ENCODE measurements at regions of chr4 and their contacts with region 1.

Region 1: DNA sequence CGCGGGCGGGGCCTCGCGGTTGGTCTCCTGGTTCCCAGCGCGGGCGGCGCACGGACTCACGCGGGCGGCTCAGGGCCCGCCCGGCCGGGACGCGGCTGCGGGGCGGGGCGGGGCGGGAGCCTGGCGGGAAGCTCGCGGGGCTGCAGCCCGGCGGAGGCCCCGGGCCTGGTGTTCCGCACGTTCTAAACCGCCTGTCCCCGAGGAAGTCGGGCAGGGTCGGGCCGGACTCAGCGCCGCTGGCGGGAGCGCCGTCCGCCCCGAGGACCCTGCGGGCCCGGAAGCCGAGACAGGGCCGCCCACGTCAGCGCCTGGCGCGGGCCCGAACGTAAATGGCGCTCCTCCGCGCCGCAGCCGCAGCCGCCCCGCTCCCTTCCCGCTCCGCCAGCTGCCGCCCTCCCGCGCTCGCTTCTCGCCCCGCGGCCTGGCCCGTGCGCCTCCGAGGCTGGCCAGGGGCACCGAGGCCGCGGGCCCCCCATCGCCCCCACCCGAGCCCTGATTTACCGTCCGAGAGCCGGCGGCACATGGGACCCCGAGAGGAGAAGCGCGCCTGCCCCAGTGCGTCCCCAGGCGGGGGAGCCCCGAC is 309 bp upstream of the CTBP1 start:
- DNase-seq: peak; percentile 85
- H3K4me3 Mint-ChIP-seq: peak overlapping the region; percentile 85
- H3K27ac Mint-ChIP-seq: peak overlapping the region; percentile 95
- H3K4me1 Mint-ChIP-seq: peaks cover 73% of the 10 kb centered on the region
- H3K27me3 Mint-ChIP-seq: no peaks in the 10 kb centered on the region

Region 2: GRCh38 chr4:646460-646859 is 602.8 kb before region 1 on chr4:
- CTCF ChIA-PET with region 1: no interaction called
- POLR2A ChIA-PET with region 1: no interaction called
- DNase-seq: no peak
- H3K4me3 Mint-ChIP-seq: peak overlapping the region; percentile 34
- H3K27ac Mint-ChIP-seq: no peak overlapping the region
- H3K4me1 Mint-ChIP-seq: peaks cover 2% of the 10 kb centered on the region
- H3K27me3 Mint-ChIP-seq: peaks cover 3% of the 10 kb centered on the region

Region 3: DNA sequence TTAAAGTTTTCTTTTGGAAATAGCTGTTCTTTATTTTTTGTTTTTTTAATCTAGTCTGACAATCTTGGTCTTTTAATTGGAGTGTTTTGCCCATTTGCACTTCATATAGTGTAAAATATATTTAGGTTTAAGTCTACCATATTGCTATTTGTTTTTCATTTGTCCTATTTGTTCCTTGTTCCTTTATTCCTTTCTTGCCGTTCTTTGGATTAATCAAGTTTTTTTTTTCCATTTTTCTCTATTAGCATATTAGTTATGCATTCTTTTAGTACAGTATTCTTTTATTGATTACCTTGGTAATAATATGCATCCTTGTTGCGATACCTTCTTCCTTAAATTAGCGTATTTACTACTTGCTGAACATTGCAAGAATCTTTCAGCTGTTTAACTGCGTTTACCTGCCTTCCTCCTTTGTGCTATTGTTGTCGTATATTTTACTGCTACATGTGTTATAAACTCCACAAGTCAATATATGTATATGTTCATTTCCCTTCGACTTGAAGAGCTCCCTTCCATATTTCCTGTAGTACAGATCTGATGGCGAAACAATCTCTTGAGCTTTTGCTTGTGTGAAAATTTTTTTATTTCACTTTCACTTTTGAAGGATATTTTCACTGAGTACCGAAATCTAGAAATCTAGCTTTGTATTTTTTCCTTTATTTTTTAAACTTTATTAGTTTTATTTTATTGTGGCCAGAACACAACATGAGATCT is 112.0 kb before region 1 on chr4:
- CTCF ChIA-PET with region 1: interaction called, 6 read pairs
- POLR2A ChIA-PET with region 1: interaction called, 22 read pairs
- DNase-seq: no peak
- H3K4me3 Mint-ChIP-seq: peak overlapping the region; percentile 62
- H3K27ac Mint-ChIP-seq: no peak overlapping the region
- H3K4me1 Mint-ChIP-seq: peaks cover 16% of the 10 kb centered on the region
- H3K27me3 Mint-ChIP-seq: peaks cover 25% of the 10 kb centered on the region

Region 4: GRCh38 chr4:1167247-1167949 is 81.8 kb before region 1 on chr4:
- CTCF ChIA-PET with region 1: interaction called, 12 read pairs
- POLR2A ChIA-PET with region 1: interaction called, 9 read pairs
- DNase-seq: peak; percentile 91
- H3K4me3 Mint-ChIP-seq: peak overlapping the region; percentile 78
- H3K27ac Mint-ChIP-seq: peak overlapping the region; percentile 63
- H3K4me1 Mint-ChIP-seq: peaks cover 33% of the 10 kb centered on the region
- H3K27me3 Mint-ChIP-seq: peaks cover 24% of the 10 kb centered on the region

Region 5: DNA sequence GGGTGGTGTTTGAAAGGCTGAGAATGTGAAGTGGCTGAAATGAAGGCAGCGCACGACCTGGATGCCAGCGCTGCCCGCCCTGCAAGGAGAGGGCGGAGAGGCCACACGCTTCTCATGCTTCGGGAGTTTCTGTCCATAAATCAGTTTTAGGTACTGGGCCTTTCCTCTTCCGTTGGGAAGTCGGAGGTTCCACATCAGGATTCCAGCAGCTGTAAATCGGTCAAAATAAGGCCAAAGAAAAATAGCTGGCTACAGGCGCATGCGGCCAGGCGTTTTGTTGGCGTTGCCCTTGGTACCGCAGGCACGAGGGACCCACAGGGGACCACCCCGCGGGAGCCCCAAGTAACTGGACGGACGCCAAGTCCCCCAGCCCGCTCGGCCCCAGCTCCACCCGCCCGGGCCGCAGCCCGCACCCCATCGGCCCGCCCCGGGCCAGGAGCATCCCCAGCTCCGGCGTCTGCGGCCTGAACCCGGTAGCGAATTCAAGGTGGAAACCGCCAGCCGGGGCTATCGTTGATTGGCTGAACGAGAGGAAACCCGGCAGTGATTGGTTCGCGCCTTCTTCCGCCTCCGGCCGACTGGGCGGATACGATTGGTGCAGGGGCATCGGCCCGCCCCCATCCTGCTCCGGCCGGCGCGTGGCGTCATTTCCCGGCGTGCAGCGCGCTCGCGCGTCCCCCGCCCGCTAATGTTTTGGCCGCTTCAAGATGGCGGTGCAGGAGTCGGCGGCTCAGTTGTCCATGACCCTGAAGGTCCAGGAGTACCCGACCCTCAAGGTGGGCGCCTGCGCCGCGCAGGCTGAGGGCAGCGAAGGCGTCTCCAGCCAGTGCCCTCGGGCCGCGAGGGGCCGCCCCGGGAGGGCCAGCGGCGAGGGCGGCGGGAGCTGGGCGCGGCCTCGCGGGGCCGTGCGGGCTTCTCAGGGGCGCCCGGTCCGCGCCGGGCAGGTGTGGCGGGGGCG is 40.2 kb after region 1 on chr4 and contains the start of gene MAEA:
- CTCF ChIA-PET with region 1: no interaction called
- POLR2A ChIA-PET with region 1: interaction called, 93 read pairs
- DNase-seq: peak; percentile 98
- H3K4me3 Mint-ChIP-seq: peak within 1 kb of the TSS; percentile 94
- H3K27ac Mint-ChIP-seq: peak within 1 kb of the TSS; percentile 90
- H3K4me1 Mint-ChIP-seq: peaks cover 39% of the 10 kb centered on the region
- H3K27me3 Mint-ChIP-seq: no peaks in the 10 kb centered on the region
- total RNA-seq, gene MAEA: 61.6 to 64.1 TPM

Region 6: GRCh38 chr4:1329408-1330371 is 80.5 kb after region 1 on chr4:
- CTCF ChIA-PET with region 1: no interaction called
- POLR2A ChIA-PET with region 1: interaction called, 15 read pairs
- DNase-seq: no peak
- H3K4me3 Mint-ChIP-seq: peak overlapping the region; percentile 40
- H3K27ac Mint-ChIP-seq: peak overlapping the region; percentile 85
- H3K4me1 Mint-ChIP-seq: peaks cover 36% of the 10 kb centered on the region
- H3K27me3 Mint-ChIP-seq: no peaks in the 10 kb centered on the region

Region 7: DNA sequence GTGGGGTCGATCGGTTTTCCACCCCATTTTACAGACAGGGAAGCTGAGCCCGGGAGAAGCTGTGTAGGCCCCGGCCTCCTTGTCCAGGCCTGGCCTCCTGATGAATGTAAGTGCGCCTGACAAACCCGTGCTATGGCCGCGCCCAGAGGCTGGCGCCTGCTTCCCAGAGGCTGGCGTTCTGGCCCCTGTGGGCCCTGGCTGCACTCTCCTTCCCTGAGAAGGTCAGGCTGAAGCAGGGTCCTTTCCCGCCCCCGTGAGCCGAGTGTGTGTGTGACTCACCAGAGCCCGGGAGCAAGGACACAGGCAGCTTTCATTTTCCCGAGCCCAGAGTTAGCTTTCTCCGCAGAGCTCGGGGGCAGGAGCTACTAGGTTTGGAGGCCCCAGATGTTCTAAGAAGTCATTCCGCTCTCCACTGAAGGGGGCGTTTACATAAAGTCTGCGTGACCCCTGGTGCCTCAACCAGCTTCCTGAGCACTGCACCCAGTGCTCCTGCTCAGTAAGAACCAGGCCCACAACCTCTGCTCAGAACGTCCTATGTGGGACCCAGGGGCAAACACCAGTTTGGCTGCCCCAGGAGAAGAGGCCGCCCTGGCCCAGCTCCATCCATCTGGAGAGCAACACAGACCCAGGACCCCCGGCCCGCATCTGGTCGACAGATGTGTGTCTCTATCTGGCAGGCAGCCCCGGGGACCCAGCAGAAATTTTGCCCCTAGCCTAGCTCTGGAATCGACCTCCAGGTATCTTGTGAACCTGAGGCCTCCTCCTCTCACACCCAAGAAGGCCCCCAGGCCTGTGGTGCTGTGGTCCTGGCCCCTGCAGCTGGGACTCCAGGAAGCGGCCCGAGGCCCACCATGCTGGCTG is 111.4 kb after region 1 on chr4:
- CTCF ChIA-PET with region 1: no interaction called
- POLR2A ChIA-PET with region 1: no interaction called
- DNase-seq: no peak
- H3K4me3 Mint-ChIP-seq: no peak overlapping the region
- H3K27ac Mint-ChIP-seq: no peak overlapping the region
- H3K4me1 Mint-ChIP-seq: no peaks in the 10 kb centered on the region
- H3K27me3 Mint-ChIP-seq: no peaks in the 10 kb centered on the region

Region 8: GRCh38 chr4:1459722-1460511 is 210.7 kb after region 1 on chr4:
- CTCF ChIA-PET with region 1: no interaction called
- POLR2A ChIA-PET with region 1: no interaction called
- DNase-seq: no peak
- H3K4me3 Mint-ChIP-seq: no peak overlapping the region
- H3K27ac Mint-ChIP-seq: no peak overlapping the region
- H3K4me1 Mint-ChIP-seq: no peaks in the 10 kb centered on the region
- H3K27me3 Mint-ChIP-seq: peaks cover 19% of the 10 kb centered on the region

Measured in activated CD4-positive, alpha-beta memory T cell treated with anti-CD3 and anti-CD28 coated beads, Interleukin-2, amount 10 ng/mL, durations not matched to agents 7 days and 5 days (primary cell).